ENCODE measurements at regions of chr5 and their contacts with region 1.

Region 1: DNA sequence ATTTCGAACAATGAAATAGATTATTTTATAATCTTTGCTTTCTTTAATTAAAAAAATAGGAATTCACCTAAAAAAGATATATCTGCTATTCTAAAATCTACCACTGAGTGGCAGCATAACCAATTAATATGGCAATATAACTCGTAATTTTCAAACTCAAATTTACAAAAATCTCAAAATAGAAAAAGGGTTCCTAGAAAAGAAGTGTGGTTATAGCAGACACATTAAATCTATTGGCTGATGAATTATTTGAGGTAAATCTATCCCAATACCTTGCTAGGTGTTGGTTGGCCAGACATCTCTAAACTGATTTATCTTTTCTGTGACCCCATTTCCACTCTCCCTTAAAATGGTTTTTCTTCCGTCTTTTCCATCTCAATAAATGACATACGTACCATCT is 30.2 kb upstream of the NRG2 start:
- DNase-seq: no peak
- ATAC-seq: no peak
- H3K4me3 Mint-ChIP-seq: no peak overlapping the region
- H3K27ac Mint-ChIP-seq: no peak overlapping the region
- H3K4me1 Mint-ChIP-seq: no peaks in the 10 kb centered on the region
- H3K27me3 Mint-ChIP-seq: peaks cover 9% of the 10 kb centered on the region
- CTCF ChIP-seq: peak; percentile 27; the same call in 1 of the 2 replicates

Region 2: DNA sequence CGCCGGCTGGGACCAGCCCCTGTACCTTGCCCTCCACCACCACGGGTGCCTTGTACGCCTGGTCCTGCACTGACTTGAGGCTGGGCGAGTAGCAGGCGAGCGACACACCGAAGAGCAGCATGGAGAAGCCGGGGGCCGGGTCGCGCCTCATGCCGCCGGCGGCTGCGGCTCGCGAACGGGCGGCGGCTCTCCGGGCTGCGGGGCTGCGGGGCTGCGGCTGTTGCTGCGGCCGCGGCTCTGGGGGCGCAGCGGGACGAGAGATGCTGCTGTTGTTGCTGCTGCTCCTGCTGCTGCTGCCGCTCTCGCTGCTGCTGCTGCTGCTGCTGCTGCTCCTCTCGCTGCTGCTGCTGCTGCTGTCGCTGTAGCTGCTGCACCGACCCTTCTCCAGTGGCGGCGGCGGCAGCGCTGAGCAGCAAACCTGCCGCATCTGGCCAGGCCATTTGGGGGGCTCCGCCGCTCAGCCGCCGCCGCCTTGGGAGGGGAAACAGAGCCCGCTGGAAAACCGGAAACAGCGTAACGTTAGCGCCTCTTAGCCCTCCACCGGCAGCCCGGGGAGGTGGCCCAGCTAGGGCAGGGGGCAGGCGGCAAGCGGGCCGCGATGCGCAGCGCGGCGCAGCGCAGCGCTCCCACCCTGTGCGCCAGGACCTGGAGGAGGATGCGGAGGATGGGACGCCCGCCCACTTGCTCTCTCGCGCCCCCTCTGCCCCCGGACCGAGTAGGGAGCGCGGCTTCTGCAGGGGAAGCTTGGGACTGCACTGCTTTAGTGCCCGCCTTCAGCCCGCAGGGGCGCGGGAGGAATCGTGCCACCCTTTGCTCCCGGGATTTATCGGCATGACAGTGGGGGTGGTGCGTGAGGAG is 30.4 kb before region 1 on chr5 and contains the start of gene NRG2:
- CTCF ChIA-PET with region 1: interaction called, 13 read pairs
- POLR2A ChIA-PET with region 1: no interaction called
- DNase-seq: peak; percentile 88
- ATAC-seq: peak; percentile 89
- H3K4me3 Mint-ChIP-seq: peak within 1 kb of the TSS; percentile 70
- H3K27ac Mint-ChIP-seq: no peak within 1 kb of the TSS
- H3K4me1 Mint-ChIP-seq: peaks cover 28% of the 10 kb centered on the region
- H3K27me3 Mint-ChIP-seq: peaks cover 86% of the 10 kb centered on the region
- CTCF ChIP-seq: no peak
- total RNA-seq, gene NRG2: 0.44 to 0.73 TPM (median 0.46 TPM) in 3 replicates

Region 3: DNA sequence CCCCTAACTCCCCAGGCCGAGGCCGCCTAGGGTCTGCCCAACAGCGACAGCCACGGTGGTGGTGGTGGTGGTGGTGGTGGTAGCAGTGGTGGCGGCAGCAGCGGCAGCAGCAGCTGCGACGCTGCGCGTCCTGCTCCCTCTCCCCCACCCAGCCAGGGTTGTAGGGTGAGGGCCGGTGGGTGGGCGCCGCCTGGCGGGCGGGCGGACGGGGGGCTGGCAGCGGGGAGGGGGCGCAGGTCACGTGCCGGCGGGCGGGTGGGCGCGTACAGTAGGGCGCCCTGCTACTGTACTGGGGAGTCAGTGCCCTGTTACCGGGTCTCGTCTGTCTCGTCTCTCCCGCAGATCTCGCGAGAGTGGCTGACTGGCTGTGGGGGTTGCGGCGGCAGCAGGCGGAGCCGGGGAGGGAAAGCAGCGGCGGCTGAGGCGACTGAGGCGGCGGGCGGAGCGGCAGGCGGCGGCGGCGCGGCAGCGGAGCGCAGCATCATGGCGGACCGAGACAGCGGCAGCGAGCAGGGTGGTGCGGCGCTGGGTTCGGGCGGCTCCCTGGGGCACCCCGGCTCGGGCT is 40.5 kb after region 1 on chr5 and contains the start of gene PURA:
- CTCF ChIA-PET with region 1: interaction called, 12 read pairs
- POLR2A ChIA-PET with region 1: no interaction called
- DNase-seq: peak; percentile 96
- ATAC-seq: peak; percentile 85
- H3K4me3 Mint-ChIP-seq: peak within 1 kb of the TSS; percentile 86
- H3K27ac Mint-ChIP-seq: peak within 1 kb of the TSS; percentile 73; the same call in 1 of the 2 replicates
- H3K4me1 Mint-ChIP-seq: peaks cover 73% of the 10 kb centered on the region
- H3K27me3 Mint-ChIP-seq: peaks cover 77% of the 10 kb centered on the region
- CTCF ChIP-seq: no peak; the same call in 1 of the 2 replicates
- total RNA-seq, gene PURA: 6.0 to 9.0 TPM (median 6.4 TPM) in 3 replicates

Region 4: DNA sequence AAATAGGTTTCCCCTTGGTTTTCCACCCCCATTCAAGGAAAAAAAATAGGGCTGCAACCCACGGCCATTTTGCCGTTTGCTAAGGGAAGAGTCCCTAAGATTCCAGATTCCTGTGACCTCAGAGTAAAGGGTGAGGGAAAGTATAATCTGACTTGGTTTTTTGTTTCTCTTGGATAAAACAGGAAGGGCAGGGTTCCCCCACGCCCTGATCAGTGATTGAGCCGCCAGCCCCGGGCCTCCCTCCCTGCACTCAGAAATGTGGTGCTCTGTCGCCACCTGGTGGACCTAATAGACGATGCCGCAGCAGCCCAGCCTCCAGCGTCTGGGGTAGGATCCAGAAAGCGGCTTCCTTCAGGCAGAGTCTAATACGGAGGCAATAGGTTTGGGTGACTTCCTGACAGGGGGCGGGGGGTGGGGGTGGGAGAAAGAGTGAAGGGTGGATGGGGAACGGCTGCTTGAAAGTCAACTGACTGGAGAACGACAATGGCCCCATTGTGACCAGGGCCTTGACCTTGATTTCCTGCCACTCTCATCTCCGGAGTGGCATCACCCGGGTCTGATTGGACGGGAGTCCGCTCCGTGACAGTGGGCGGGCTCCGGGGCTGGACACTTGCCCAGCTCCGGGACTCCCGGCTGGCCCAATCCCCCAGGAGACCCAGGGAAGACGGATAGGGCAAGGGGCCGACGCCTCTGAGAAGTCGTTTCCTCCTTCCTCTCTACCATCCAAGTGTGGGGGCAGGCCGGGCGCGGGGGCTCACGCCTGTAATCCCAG is 83.9 kb after region 1 on chr5:
- CTCF ChIA-PET with region 1: interaction called, 11 read pairs
- POLR2A ChIA-PET with region 1: interaction called, 3 read pairs
- DNase-seq: peak; percentile 94
- ATAC-seq: peak; percentile 91
- H3K4me3 Mint-ChIP-seq: peak overlapping the region; percentile 67
- H3K27ac Mint-ChIP-seq: no peak overlapping the region
- H3K4me1 Mint-ChIP-seq: peaks cover 28% of the 10 kb centered on the region
- H3K27me3 Mint-ChIP-seq: peaks cover 17% of the 10 kb centered on the region
- CTCF ChIP-seq: peak; percentile 86

Region 5: DNA sequence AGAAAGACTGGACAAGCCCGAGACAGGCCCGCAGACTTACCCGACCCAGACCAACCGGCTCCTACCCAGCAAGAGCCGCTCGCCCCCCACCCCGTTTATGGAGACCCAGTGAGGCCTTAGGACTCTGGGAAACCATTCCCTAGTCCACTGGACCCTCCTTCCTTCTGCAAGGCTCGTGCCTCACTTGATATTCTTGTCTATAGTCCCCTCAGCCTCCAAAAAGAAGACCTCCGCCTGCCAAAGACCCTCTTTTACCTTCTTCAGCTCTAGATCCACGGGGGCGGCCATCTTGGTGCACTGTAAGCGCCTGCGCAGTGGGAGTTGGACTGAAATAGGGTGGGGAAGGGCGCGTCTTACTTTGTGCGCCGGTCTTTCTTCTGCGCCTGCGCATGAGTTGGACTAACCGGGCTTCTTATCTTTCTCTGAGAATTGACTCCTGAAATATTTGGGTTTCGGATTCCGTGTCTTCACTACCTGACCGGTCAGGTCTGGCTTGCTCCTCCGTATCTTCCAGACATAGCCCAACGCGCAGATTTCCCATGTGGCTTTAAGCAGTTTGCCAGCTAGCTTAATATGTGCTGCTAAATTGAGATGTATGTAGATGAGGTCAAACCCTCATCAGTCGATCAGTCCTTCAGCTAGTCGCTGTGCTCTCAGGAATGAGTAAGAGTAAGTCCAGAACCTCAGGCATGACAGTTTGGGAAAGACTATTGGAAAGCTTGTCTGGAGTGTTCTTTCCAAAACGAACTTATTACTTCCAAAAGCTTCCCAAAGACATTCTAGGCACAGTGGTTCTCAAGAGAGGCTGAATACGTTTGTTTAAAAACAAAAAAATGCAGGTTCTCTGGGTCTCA is 229.7 kb after region 1 on chr5 and contains the start of gene PFDN1:
- CTCF ChIA-PET with region 1: no interaction called
- POLR2A ChIA-PET with region 1: no interaction called
- DNase-seq: peak; percentile 94
- ATAC-seq: peak; percentile 97
- H3K4me3 Mint-ChIP-seq: peak within 1 kb of the TSS; percentile 96
- H3K27ac Mint-ChIP-seq: peak within 1 kb of the TSS; percentile 99
- H3K4me1 Mint-ChIP-seq: peaks cover 8% of the 10 kb centered on the region
- H3K27me3 Mint-ChIP-seq: peaks cover 6% of the 10 kb centered on the region; the same call in 1 of the 2 replicates
- CTCF ChIP-seq: no peak
- total RNA-seq, gene PFDN1: 44.1 to 46.4 TPM (median 46.2 TPM) in 3 replicates

Region 6: GRCh38 chr5:140468188-140468587 is 394.9 kb after region 1 on chr5:
- CTCF ChIA-PET with region 1: no interaction called
- POLR2A ChIA-PET with region 1: no interaction called
- DNase-seq: no peak
- ATAC-seq: no peak
- H3K4me3 Mint-ChIP-seq: no peak overlapping the region
- H3K27ac Mint-ChIP-seq: no peak overlapping the region
- H3K4me1 Mint-ChIP-seq: no peaks in the 10 kb centered on the region
- H3K27me3 Mint-ChIP-seq: no peaks in the 10 kb centered on the region
- CTCF ChIP-seq: no peak

Region 7: DNA sequence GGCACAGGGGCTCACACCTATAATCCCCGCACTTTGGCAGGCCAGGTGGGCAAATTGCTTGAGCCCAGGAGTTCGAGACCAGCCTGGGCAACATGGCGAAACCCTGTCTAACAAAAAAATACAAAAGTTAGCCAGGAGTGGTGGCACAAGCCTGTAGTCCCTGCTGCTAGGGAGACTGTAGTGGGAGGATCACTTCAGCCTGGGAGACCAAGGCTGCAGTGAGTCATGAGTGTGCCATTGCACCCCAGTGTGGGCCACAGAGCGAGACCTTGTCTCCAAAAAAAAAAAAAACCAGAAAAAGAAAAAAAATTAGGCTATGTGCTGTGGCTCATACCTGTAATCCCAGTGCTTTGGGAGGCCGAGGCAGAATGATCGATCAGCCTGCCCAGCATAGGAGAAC is 415.6 kb after region 1 on chr5:
- CTCF ChIA-PET with region 1: no interaction called
- POLR2A ChIA-PET with region 1: no interaction called
- DNase-seq: no peak
- ATAC-seq: no peak
- H3K4me3 Mint-ChIP-seq: no peak overlapping the region
- H3K27ac Mint-ChIP-seq: no peak overlapping the region
- H3K4me1 Mint-ChIP-seq: no peaks in the 10 kb centered on the region
- H3K27me3 Mint-ChIP-seq: no peaks in the 10 kb centered on the region
- CTCF ChIP-seq: no peak

Measured in WTC11 (cell line).